ENCODE measurements at regions of chr22 and their contacts with region 1.

Region 1: GRCh38 chr22:20495861-20496681 is 476 bp upstream of the KLHL22 start:
- DNase-seq: peak; percentile 93
- H3K4me3 Mint-ChIP-seq: peak overlapping the region; percentile 89
- H3K27ac Mint-ChIP-seq: peak overlapping the region; percentile 84
- H3K4me1 Mint-ChIP-seq: peaks cover 13% of the 10 kb centered on the region
- H3K27me3 Mint-ChIP-seq: peaks cover 7% of the 10 kb centered on the region

Region 2: GRCh38 chr22:20418211-20418788 is 77.8 kb before region 1 on chr22:
- intact Hi-C with region 1: loop called (anchors 2 kb)
- DNase-seq: peak; percentile 58
- H3K4me3 Mint-ChIP-seq: no peak overlapping the region
- H3K27ac Mint-ChIP-seq: no peak overlapping the region
- H3K4me1 Mint-ChIP-seq: no peaks in the 10 kb centered on the region
- H3K27me3 Mint-ChIP-seq: peaks cover 12% of the 10 kb centered on the region

Region 3: DNA sequence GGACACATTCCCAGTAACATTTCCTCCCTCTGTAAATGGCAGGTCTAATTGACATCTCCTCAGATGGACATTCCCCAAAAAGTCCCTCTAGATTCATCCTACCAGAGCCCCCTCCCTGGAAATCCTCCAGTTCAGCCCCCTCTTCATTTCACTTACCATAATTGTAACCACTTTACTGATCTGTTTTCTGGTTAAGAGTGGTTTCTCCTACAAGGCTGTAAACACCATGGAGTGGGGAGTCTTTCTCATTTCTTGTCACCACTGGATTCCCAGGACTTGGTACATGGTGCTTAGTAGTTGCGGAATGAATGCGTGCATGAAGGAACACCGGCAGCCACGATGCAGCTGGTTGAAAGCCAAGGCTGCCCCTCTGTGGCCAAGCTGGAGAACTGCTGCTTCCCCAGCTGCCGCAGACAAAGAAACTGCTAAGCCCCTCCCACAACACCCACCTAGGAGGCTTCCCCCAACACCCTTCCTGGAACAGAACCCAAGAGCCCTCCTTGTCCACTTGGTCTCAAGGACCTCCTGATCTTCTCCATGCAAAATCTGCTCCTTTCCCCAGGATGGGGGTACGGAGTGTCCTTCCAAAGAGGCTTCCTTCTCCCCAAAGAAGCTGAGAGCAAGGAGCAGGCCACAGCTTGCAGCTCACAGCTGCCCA is 39.9 kb before region 1 on chr22:
- intact Hi-C with region 1: loop called (anchors 1 kb)
- DNase-seq: peak; percentile 66
- H3K4me3 Mint-ChIP-seq: no peak overlapping the region
- H3K27ac Mint-ChIP-seq: peak overlapping the region; percentile 40
- H3K4me1 Mint-ChIP-seq: peaks cover 14% of the 10 kb centered on the region
- H3K27me3 Mint-ChIP-seq: peaks cover 3% of the 10 kb centered on the region

Region 4: DNA sequence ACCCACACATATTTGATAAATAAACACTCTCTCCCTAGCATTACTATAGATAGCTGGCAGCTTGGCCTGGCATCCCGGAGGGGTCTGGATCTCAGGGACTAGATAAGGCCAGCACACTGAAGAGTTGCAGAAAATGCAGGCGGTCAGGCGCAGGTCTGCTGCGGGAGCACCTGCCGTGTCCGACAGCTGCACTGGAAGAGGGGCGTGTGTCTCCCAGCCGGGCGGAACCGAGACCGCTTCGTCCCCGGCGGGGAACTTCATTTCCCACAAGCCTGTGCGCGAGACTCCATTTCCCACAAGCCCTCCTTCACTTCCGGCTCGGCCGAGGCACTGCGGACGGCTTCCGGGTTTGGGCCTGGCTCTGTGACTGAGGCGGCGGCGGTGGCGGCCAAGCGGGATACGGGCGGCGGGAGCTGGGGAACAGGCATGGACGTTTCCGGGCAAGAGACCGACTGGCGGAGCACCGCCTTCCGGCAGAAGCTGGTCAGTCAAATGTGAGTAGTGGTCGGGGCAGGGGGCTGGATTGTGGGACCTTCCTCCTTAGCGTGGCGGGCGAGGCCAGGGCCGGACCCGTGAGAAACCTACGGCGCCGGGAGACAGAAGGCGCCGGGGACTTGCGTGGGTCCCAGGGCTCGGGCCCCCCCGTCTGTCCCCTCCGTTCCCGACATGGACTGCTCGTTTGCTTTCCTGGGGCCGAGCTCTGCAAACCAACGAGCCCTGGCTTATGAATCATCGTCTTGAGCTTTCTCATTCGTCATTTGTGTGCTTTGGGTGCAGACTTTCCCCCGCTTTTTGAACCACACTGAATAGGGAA is 11.4 kb after region 1 on chr22 and contains the start of gene MED15:
- intact Hi-C with region 1: loop called (anchors 1 kb)
- DNase-seq: peak; percentile 88
- H3K4me3 Mint-ChIP-seq: peak within 1 kb of the TSS; percentile 95
- H3K27ac Mint-ChIP-seq: peak within 1 kb of the TSS; percentile 96
- H3K4me1 Mint-ChIP-seq: peaks cover 50% of the 10 kb centered on the region
- H3K27me3 Mint-ChIP-seq: no peaks in the 10 kb centered on the region
- total RNA-seq, gene MED15: 103 and 110 TPM in 2 replicates

Region 5: DNA sequence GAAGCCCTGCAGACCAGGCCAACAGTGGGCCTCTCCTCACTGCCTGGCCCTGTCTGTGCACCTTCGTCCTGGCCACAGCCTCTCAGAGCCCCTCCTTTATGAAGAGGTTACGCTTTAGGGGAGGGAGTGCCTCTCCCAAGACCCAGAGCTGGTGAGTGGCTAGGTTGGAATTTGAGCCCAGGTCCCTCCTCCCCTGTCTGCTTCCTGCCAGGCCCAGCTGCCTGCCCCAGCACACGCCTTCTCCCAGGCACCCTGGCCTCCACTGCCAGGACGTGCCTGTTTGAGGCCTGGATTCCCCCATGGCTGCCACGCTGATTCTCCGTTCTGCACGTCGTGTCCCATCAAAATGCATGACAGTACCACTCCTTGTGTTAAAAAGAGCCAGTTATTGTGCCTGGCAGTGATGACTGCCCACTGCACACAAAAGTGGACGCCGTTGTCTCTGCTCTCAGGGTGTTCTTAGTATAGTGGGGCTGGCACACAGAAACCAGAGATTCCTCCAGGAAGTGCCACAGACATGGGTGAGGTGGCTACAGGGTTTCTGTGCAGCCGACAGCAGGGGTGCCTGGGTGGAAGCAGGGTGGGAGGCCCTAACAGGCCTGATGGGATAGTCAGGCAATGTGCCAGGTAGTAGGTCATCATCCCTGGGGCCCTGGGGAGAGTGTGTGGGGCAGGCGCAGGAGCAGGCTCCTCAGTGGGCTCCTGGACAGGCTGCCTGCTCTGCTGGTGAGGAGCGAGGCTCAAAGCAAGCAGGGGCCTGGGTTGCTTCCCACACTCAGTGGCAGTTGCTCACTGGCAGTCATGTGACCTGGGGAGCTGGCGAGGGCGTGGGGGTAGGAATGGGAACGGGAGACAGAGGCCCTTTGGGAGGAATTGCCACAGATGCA is 35.5 kb after region 1 on chr22:
- intact Hi-C with region 1: no loop called
- DNase-seq: no peak
- H3K4me3 Mint-ChIP-seq: no peak overlapping the region
- H3K27ac Mint-ChIP-seq: no peak overlapping the region
- H3K4me1 Mint-ChIP-seq: peaks cover 48% of the 10 kb centered on the region
- H3K27me3 Mint-ChIP-seq: no peaks in the 10 kb centered on the region